Caco-2 (cell line): ENCODE measurements at regions of chr5 and their contacts with region 1.

Region 1: GRCh38 chr5:56270568-56271392 is 37.6 kb upstream of the ANKRD55 start:
- DNase-seq: peak; percentile 89 to 92
- H3K4me3 ChIP-seq: no peak overlapping the region
- H3K4me3 Mint-ChIP-seq: no peak overlapping the region
- H3K27ac Mint-ChIP-seq: peak overlapping the region; percentile 74
- H3K4me1 ChIP-seq: peaks cover 25% of the 10 kb centered on the region
- H3K4me1 Mint-ChIP-seq: peaks cover 29% of the 10 kb centered on the region
- H3K27me3 ChIP-seq: no peaks in the 10 kb centered on the region
- H3K27me3 Mint-ChIP-seq: no peaks in the 10 kb centered on the region
- CTCF ChIP-seq: peak; percentile 99

Region 2: GRCh38 chr5:55936100-55936693 is 334.6 kb before region 1 on chr5:
- CTCF ChIA-PET with region 1: interaction called, 8 read pairs
- POLR2A ChIA-PET with region 1: no interaction called
- intact Hi-C with region 1: loop called (anchors 2 kb)
- DNase-seq: peak; percentile 87
- H3K4me3 ChIP-seq: no peak overlapping the region
- H3K4me3 Mint-ChIP-seq: no peak overlapping the region
- H3K27ac Mint-ChIP-seq: peak overlapping the region; percentile 100
- H3K4me1 ChIP-seq: peaks cover 44% of the 10 kb centered on the region
- H3K4me1 Mint-ChIP-seq: peaks cover 48% of the 10 kb centered on the region
- H3K27me3 ChIP-seq: no peaks in the 10 kb centered on the region
- H3K27me3 Mint-ChIP-seq: no peaks in the 10 kb centered on the region
- CTCF ChIP-seq: peak; percentile 85 to 95

Region 3: GRCh38 chr5:56175488-56175887 is 95.3 kb before region 1 on chr5:
- CTCF ChIA-PET with region 1: no interaction called
- POLR2A ChIA-PET with region 1: no interaction called
- intact Hi-C with region 1: no loop called
- DNase-seq: peak; percentile 56 to 68
- H3K4me3 ChIP-seq: no peak overlapping the region
- H3K4me3 Mint-ChIP-seq: peak overlapping the region; percentile 15
- H3K27ac Mint-ChIP-seq: peak overlapping the region; percentile 96
- H3K4me1 ChIP-seq: peaks cover 19% of the 10 kb centered on the region
- H3K4me1 Mint-ChIP-seq: peaks cover 20% of the 10 kb centered on the region
- H3K27me3 ChIP-seq: no peaks in the 10 kb centered on the region
- H3K27me3 Mint-ChIP-seq: no peaks in the 10 kb centered on the region
- CTCF ChIP-seq: no peak

Region 4: GRCh38 chr5:56259002-56259511 is 11.7 kb before region 1 on chr5:
- CTCF ChIA-PET with region 1: no interaction called
- POLR2A ChIA-PET with region 1: no interaction called
- intact Hi-C with region 1: no loop called
- DNase-seq: no peak
- H3K4me3 ChIP-seq: no peak overlapping the region
- H3K4me3 Mint-ChIP-seq: no peak overlapping the region
- H3K27ac Mint-ChIP-seq: no peak overlapping the region
- H3K4me1 ChIP-seq: peaks cover 4% of the 10 kb centered on the region; the same call in 1 of the 2 replicates
- H3K4me1 Mint-ChIP-seq: no peaks in the 10 kb centered on the region
- H3K27me3 ChIP-seq: no peaks in the 10 kb centered on the region
- H3K27me3 Mint-ChIP-seq: no peaks in the 10 kb centered on the region
- CTCF ChIP-seq: no peak

Region 5: DNA sequence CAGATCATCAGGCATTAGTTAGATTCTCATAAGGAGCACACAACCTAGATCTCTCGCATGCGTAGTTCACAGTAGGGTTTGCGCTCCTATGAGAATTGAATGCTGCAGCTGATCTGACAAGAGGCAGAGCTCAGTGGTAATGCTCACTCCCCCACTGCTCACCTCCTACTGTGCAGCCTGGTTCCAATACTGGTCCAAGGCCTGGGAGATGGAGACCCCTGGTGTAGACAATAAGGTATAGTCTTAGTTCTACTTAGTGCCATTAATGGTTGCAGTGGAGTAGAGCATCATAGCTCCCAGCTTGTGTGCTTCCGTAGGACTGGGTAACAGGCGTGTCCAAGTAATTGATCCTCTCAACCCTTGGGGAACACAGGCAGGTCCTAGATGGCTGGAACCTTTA is 32.7 kb after region 1 on chr5:
- CTCF ChIA-PET with region 1: interaction called, 21 read pairs
- POLR2A ChIA-PET with region 1: interaction called, 3 read pairs
- intact Hi-C with region 1: loop called (anchors 1 kb)
- DNase-seq: peak in 1 of 2 experiments; percentile 48
- H3K4me3 ChIP-seq: no peak overlapping the region
- H3K4me3 Mint-ChIP-seq: no peak overlapping the region
- H3K27ac Mint-ChIP-seq: no peak overlapping the region
- H3K4me1 ChIP-seq: peaks cover 25% of the 10 kb centered on the region
- H3K4me1 Mint-ChIP-seq: peaks cover 15% of the 10 kb centered on the region
- H3K27me3 ChIP-seq: no peaks in the 10 kb centered on the region
- H3K27me3 Mint-ChIP-seq: no peaks in the 10 kb centered on the region
- CTCF ChIP-seq: peak in 1 of 2 experiments; percentile 28

Region 6: DNA sequence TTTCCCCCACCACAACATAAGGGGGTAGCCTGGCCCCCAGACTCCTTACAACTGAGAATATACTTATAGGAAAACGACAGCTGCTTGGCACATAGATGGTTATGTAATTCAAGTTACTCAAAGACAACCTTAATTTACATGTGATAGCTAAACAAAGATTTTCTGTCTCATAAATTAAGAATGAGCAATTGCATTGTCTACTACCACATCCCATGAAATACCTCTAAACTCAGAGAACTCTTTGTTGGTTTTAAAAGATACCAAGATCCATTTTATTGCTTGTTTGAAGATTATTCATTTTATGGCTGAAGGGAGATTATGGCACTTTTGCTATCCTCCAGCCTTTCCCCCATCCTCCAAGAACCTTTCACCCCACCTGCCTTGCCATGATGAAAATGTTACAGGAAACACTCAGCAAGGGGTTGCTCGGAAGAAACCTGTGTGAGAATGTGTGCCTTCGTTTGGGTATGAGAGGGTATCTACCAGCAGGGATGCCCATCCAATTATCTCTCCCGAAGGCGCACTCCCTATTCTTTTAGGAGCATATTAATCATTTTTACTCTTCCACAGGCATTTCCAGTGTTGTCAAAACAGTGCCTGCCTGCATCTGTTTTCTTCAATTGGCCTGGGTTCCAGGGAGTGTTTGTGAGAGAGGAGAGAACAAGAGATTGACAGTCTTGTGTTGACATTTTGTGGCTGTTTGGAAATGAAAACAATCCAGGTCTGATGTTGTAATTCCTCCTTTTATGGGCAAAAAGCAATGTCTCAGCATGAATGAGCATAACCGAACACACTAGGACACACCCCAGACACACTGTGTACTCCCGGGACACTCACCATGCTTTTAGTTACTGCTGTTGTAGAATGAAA is 170.3 kb after region 1 on chr5:
- CTCF ChIA-PET with region 1: no interaction called
- POLR2A ChIA-PET with region 1: no interaction called
- intact Hi-C with region 1: loop called (anchors 2 kb)
- DNase-seq: peak; percentile 70 to 75
- H3K4me3 ChIP-seq: no peak overlapping the region
- H3K4me3 Mint-ChIP-seq: peak overlapping the region; percentile 59
- H3K27ac Mint-ChIP-seq: peak overlapping the region; percentile 81
- H3K4me1 ChIP-seq: peaks cover 42% of the 10 kb centered on the region
- H3K4me1 Mint-ChIP-seq: peaks cover 23% of the 10 kb centered on the region
- H3K27me3 ChIP-seq: no peaks in the 10 kb centered on the region
- H3K27me3 Mint-ChIP-seq: no peaks in the 10 kb centered on the region
- CTCF ChIP-seq: no peak

Region 7: GRCh38 chr5:56638061-56638621 is 367.4 kb after region 1 on chr5:
- CTCF ChIA-PET with region 1: interaction called, 4 read pairs
- POLR2A ChIA-PET with region 1: no interaction called
- intact Hi-C with region 1: loop called (anchors 2 kb)
- DNase-seq: peak; percentile 81 to 90
- H3K4me3 ChIP-seq: no peak overlapping the region
- H3K4me3 Mint-ChIP-seq: peak overlapping the region; percentile 55
- H3K27ac Mint-ChIP-seq: peak overlapping the region; percentile 90
- H3K4me1 ChIP-seq: peaks cover 84% of the 10 kb centered on the region
- H3K4me1 Mint-ChIP-seq: peaks cover 61% of the 10 kb centered on the region
- H3K27me3 ChIP-seq: no peaks in the 10 kb centered on the region
- H3K27me3 Mint-ChIP-seq: no peaks in the 10 kb centered on the region
- CTCF ChIP-seq: no peak

Region 8: GRCh38 chr5:56838409-56839039 is 567.7 kb after region 1 on chr5:
- CTCF ChIA-PET with region 1: interaction called, 40 read pairs
- POLR2A ChIA-PET with region 1: no interaction called
- intact Hi-C with region 1: loop called (anchors 1 kb)
- DNase-seq: peak in 1 of 2 experiments; percentile 39
- H3K4me3 ChIP-seq: no peak overlapping the region
- H3K4me3 Mint-ChIP-seq: no peak overlapping the region
- H3K27ac Mint-ChIP-seq: peak overlapping the region; percentile 22
- H3K4me1 ChIP-seq: peaks cover 43% of the 10 kb centered on the region
- H3K4me1 Mint-ChIP-seq: peaks cover 45% of the 10 kb centered on the region
- H3K27me3 ChIP-seq: no peaks in the 10 kb centered on the region
- H3K27me3 Mint-ChIP-seq: no peaks in the 10 kb centered on the region
- CTCF ChIP-seq: peak; percentile 36 to 53